Calu3 (cell line): ENCODE measurements at regions of chr1 and their contacts with region 1.

Region 1: GRCh38 chr1:178093205-178093957 is 523 bp upstream of the RASAL2 start:
- DNase-seq: peak; percentile 96
- H3K4me3 Mint-ChIP-seq: peak overlapping the region; percentile 95
- H3K27ac Mint-ChIP-seq: peak overlapping the region; percentile 82
- H3K4me1 Mint-ChIP-seq: peaks cover 19% of the 10 kb centered on the region
- H3K27me3 Mint-ChIP-seq: no peaks in the 10 kb centered on the region
- CTCF ChIP-seq: no peak

Region 2: GRCh38 chr1:177315270-177315669 is 778.1 kb before region 1 on chr1:
- CTCF ChIA-PET with region 1: no interaction called
- intact Hi-C with region 1: no loop called
- DNase-seq: no peak
- H3K4me3 Mint-ChIP-seq: peak overlapping the region; percentile 27
- H3K27ac Mint-ChIP-seq: peak overlapping the region; percentile 29
- H3K4me1 Mint-ChIP-seq: peaks cover 25% of the 10 kb centered on the region
- H3K27me3 Mint-ChIP-seq: no peaks in the 10 kb centered on the region
- CTCF ChIP-seq: no peak

Region 3: GRCh38 chr1:178031856-178032320 is 61.5 kb before region 1 on chr1:
- CTCF ChIA-PET with region 1: interaction called, 23 read pairs
- intact Hi-C with region 1: loop called (anchors 2 kb)
- DNase-seq: peak; percentile 92
- H3K4me3 Mint-ChIP-seq: no peak overlapping the region
- H3K27ac Mint-ChIP-seq: no peak overlapping the region
- H3K4me1 Mint-ChIP-seq: peaks cover 15% of the 10 kb centered on the region
- H3K27me3 Mint-ChIP-seq: no peaks in the 10 kb centered on the region
- CTCF ChIP-seq: peak; percentile 85

Region 4: DNA sequence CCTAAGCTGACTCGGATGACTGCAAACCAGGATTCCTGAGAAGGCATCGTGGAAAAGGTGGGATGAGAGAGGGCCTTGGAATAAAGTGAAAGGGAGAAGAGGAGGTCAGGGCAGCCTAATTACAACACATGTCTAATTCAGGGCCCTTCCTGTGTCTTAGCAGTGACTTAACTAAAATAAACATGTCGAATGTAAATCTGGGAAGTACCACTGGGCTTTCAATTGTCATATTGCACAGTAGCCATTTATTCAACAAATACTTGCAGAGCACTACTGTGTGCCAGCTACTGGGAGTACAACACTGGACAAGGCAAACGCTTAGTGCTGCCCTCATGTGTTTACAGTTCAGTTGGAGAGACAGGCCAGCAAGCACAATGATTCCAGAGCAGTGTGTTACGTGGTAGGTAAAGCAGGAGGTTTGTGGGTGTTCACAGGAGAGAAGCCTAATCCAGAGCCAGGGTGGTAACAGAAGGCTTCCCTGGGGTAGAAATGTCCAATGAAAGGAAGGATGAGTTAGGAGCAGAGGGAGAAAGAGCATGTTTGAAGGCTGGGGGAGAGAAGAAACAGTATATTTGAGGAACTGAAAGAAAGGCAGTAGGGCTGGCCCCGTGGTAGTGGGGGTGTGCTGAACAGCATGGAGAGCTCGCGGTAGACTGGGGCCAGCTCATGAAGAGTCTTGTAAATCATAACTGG is 37.5 kb before region 1 on chr1:
- CTCF ChIA-PET with region 1: interaction called, 3 read pairs
- intact Hi-C with region 1: loop called (anchors 2 kb)
- DNase-seq: peak; percentile 39
- H3K4me3 Mint-ChIP-seq: no peak overlapping the region
- H3K27ac Mint-ChIP-seq: no peak overlapping the region
- H3K4me1 Mint-ChIP-seq: peaks cover 61% of the 10 kb centered on the region
- H3K27me3 Mint-ChIP-seq: no peaks in the 10 kb centered on the region
- CTCF ChIP-seq: no peak

Region 5: GRCh38 chr1:178126790-178127189 is 33.4 kb after region 1 on chr1:
- CTCF ChIA-PET with region 1: interaction called, 6 read pairs
- intact Hi-C with region 1: loop called (anchors 2 kb)
- DNase-seq: peak; percentile 51
- H3K4me3 Mint-ChIP-seq: peak overlapping the region; percentile 54
- H3K27ac Mint-ChIP-seq: peak overlapping the region; percentile 92
- H3K4me1 Mint-ChIP-seq: peaks cover 58% of the 10 kb centered on the region
- H3K27me3 Mint-ChIP-seq: no peaks in the 10 kb centered on the region
- CTCF ChIP-seq: no peak

Region 6: DNA sequence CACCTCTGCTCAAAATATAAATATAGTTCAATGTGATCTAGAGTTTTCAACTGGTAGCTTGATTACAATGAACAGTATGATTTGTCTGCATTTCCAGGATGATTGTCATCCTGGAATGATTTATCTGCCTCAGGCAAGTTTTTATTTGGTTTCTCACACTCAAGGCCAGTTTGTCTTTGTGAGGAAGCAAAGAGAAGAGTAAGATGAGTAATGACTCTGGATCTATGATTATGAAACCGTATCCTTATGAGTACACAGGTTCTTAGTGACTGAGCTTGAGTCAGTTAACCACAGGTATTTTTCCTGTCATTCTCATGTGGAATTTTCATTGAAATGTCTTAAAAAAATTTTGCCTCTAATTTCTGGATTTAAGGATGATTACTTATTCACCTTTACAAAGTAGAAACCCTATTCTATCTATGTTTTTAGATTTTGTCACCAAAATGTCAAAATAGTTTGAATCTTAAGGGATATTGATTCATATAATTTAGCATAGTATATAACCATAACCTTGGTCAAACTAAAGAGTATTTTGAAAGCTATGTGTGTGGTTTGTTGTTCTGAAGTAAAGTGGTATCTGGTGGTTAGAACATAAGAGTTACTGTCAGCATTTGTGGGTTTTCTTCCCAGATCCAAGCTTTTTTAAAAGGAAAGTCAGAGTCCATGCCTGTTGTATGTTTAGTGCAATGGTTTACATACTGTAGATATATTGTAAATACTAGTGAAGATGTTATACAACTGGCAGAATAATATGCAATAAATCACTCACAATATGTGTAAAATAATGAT is 145.5 kb after region 1 on chr1:
- CTCF ChIA-PET with region 1: interaction called, 4 read pairs
- intact Hi-C with region 1: loop called (anchors 2 kb)
- DNase-seq: peak; percentile 41
- H3K4me3 Mint-ChIP-seq: peak overlapping the region; percentile 29
- H3K27ac Mint-ChIP-seq: peak overlapping the region; percentile 65
- H3K4me1 Mint-ChIP-seq: peaks cover 46% of the 10 kb centered on the region
- H3K27me3 Mint-ChIP-seq: no peaks in the 10 kb centered on the region
- CTCF ChIP-seq: no peak

Region 7: GRCh38 chr1:178282949-178283367 is 189.6 kb after region 1 on chr1:
- CTCF ChIA-PET with region 1: interaction called, 5 read pairs
- intact Hi-C with region 1: loop called (anchors 2 kb)
- DNase-seq: no peak
- H3K4me3 Mint-ChIP-seq: no peak overlapping the region
- H3K27ac Mint-ChIP-seq: no peak overlapping the region
- H3K4me1 Mint-ChIP-seq: peaks cover 39% of the 10 kb centered on the region
- H3K27me3 Mint-ChIP-seq: no peaks in the 10 kb centered on the region
- CTCF ChIP-seq: no peak